ENCODE measurements at regions of chr1 and their contacts with region 1.

Region 1: DNA sequence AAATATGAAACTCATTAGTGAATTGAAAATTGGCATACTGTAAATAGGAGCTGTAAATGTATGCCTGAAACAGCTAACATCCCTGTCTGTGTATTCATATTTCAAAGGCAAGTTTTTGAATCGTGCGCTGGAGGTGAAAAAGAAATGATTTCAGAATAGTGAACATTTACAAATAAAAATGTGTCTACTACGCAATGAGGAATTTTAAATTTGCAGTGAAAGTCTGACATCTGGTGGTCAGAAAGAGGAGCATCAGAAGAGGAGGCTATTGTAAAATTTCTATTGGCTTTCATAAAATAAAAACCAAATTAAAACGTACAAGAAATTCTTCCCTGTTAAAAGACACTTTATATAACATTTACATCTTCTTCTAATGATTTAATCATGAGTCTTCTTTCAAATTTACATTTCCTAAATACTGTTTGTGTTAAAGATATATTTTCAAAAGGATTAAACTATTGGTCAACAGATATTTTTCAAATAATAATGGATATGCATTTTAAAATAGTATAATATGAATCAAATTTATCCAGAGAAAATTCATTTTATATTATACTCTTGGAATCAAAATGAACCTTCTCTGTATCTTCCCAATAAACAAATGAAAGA is 113.7 kb upstream of the RRP15 start:
- DNase-seq: peak; percentile 87
- ATAC-seq: peak; percentile 57
- H3K4me3 ChIP-seq: no peak overlapping the region
- H3K27ac ChIP-seq: no peak overlapping the region
- H3K4me1 ChIP-seq: no peaks in the 10 kb centered on the region
- H3K27me3 ChIP-seq: peaks cover 35% of the 10 kb centered on the region
- CTCF ChIP-seq: peak; percentile 99

Region 2: GRCh38 chr1:217333939-217334338 is 837.5 kb before region 1 on chr1:
- CTCF ChIA-PET with region 1: no interaction called
- POLR2A ChIA-PET with region 1: no interaction called
- intact Hi-C with region 1: loop called (anchors 5 kb)
- DNase-seq: peak; percentile 89
- ATAC-seq: peak; percentile 77
- H3K4me3 ChIP-seq: no peak overlapping the region
- H3K27ac ChIP-seq: no peak overlapping the region
- H3K4me1 ChIP-seq: no peaks in the 10 kb centered on the region
- H3K27me3 ChIP-seq: peaks cover 5% of the 10 kb centered on the region; the same call in 1 of the 2 replicates
- CTCF ChIP-seq: peak; percentile 98

Region 3: GRCh38 chr1:217431393-217431792 is 740.0 kb before region 1 on chr1:
- CTCF ChIA-PET with region 1: no interaction called
- POLR2A ChIA-PET with region 1: no interaction called
- intact Hi-C with region 1: loop called (anchors 1 kb)
- DNase-seq: peak; percentile 64
- ATAC-seq: peak; percentile 81
- H3K4me3 ChIP-seq: no peak overlapping the region
- H3K27ac ChIP-seq: no peak overlapping the region
- H3K4me1 ChIP-seq: no peaks in the 10 kb centered on the region
- H3K27me3 ChIP-seq: no peaks in the 10 kb centered on the region
- CTCF ChIP-seq: peak; percentile 64

Region 4: GRCh38 chr1:217747156-217747769 is 424.1 kb before region 1 on chr1:
- CTCF ChIA-PET with region 1: no interaction called
- POLR2A ChIA-PET with region 1: no interaction called
- intact Hi-C with region 1: loop called (anchors 5 kb)
- DNase-seq: peak; percentile 75
- ATAC-seq: no peak; the same call in 1 of the 2 replicates
- H3K4me3 ChIP-seq: no peak overlapping the region
- H3K27ac ChIP-seq: no peak overlapping the region
- H3K4me1 ChIP-seq: no peaks in the 10 kb centered on the region
- H3K27me3 ChIP-seq: no peaks in the 10 kb centered on the region
- CTCF ChIP-seq: peak; percentile 89

Region 5: DNA sequence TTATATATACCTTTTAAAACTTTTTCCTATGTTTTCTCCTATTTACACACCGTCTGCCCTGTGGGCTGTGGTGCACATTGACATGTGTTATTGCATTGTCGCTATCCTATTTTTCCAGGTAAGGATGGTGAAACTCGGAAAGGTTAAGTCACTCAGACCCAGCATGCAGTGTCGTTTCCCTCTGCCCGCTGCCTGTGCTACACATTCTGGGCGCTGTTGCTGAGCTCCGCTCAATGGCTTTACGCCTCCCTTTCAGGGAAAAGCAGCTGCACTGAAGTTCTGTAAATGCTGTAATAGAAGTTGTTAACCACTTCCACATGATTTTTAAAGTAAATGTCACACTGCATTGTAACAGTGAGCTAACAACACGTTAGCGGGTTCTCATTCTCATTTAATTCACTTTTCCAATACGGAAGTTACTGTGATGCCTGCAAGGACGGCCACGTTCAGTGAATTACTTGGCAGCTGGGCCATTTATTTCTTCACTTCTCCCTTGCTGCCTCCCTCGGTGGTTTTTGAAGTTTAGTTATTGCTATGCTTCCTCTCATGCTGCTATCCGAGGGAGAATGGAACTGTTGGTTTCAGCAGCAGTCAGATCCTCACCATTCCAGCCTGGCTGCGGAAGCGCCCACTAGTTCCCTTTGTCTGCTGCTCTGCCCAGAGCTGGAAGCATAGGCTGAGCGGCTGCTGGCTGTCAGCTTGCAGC is 251.6 kb before region 1 on chr1:
- CTCF ChIA-PET with region 1: no interaction called
- POLR2A ChIA-PET with region 1: no interaction called
- intact Hi-C with region 1: loop called (anchors 1 kb)
- DNase-seq: no peak
- ATAC-seq: no peak
- H3K4me3 ChIP-seq: no peak overlapping the region
- H3K27ac ChIP-seq: no peak overlapping the region
- H3K4me1 ChIP-seq: peaks cover 11% of the 10 kb centered on the region
- H3K27me3 ChIP-seq: no peaks in the 10 kb centered on the region
- CTCF ChIP-seq: no peak

Region 6: GRCh38 chr1:218217040-218217439 is 45.7 kb after region 1 on chr1:
- CTCF ChIA-PET with region 1: no interaction called
- POLR2A ChIA-PET with region 1: no interaction called
- intact Hi-C with region 1: no loop called
- DNase-seq: no peak
- ATAC-seq: no peak
- H3K4me3 ChIP-seq: no peak overlapping the region
- H3K27ac ChIP-seq: no peak overlapping the region
- H3K4me1 ChIP-seq: no peaks in the 10 kb centered on the region
- H3K27me3 ChIP-seq: no peaks in the 10 kb centered on the region
- CTCF ChIP-seq: no peak

Region 7: DNA sequence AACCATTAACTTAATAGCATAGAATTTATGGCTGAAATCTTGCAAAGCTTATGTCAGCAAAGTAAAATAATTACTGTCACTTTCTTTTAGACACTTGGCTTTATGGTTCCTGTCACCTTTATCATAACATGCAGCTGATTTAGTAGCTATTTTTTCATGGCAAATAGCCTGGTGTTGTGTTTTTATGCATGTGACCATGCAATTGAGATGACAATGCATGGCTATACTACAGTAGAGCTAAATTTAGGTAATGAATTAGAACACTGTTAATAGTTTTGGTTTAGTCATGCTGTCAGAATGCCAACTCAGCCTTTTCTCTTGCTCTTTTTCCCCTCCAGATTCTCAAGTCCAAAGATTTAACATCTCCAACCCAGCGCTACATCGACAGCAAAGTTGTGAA is 262.4 kb after region 1 on chr1:
- CTCF ChIA-PET with region 1: no interaction called
- POLR2A ChIA-PET with region 1: no interaction called
- intact Hi-C with region 1: no loop called
- DNase-seq: no peak
- ATAC-seq: no peak
- H3K4me3 ChIP-seq: no peak overlapping the region
- H3K27ac ChIP-seq: no peak overlapping the region
- H3K4me1 ChIP-seq: peaks cover 14% of the 10 kb centered on the region
- H3K27me3 ChIP-seq: no peaks in the 10 kb centered on the region
- CTCF ChIP-seq: no peak

Region 8: GRCh38 chr1:218537122-218537904 is 365.9 kb after region 1 on chr1:
- CTCF ChIA-PET with region 1: no interaction called
- POLR2A ChIA-PET with region 1: no interaction called
- intact Hi-C with region 1: no loop called
- DNase-seq: peak; percentile 90
- ATAC-seq: peak; percentile 84
- H3K4me3 ChIP-seq: peak overlapping the region; percentile 2; the same call in 1 of the 2 replicates
- H3K27ac ChIP-seq: peak overlapping the region; percentile 23
- H3K4me1 ChIP-seq: peaks cover 24% of the 10 kb centered on the region
- H3K27me3 ChIP-seq: no peaks in the 10 kb centered on the region
- CTCF ChIP-seq: no peak